H1 (cell line): ENCODE measurements at regions of chr20 and their contacts with region 1.

Region 1: DNA sequence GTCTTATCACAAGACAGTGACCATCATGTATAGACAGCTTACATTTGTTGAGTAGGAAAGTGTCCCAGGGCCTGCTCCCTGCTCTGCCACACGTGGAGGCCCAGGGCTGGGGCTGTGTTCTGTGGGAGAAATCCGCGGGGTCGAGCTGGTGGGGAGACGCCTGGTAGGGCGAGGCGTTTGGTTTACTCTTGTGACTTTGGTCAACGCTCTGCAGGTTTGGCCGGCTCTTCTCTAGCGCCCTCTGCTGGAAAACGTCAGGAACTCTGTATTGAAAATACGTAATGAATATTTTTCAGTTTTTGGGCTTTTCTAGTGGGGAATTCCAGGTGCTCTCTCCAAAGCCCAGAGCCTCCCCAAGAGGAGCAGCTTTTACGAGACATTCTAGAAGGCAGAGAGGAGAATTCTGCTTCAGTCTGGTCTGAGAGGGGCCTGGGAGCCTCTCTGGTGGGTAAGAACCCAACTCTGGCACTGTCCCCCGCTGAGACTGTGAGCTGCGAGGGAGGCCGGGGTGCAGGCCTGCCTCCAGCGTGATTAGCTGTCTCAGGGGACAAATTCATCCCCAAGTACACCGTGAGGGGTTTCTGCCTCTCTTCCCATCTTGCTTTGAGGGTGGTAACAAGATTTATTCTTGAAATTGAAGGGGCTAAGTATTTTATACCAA is 112.6 kb upstream of the RALGAPA2 start:
- DNase-seq: peak in 1 of 2 experiments; percentile 83
- H3K4me3 ChIP-seq: no peak overlapping the region
- H3K27ac ChIP-seq: no peak overlapping the region
- H3K4me1 ChIP-seq: peaks cover 8 to 16% (median 11%) of the 10 kb centered on the region in 4 experiments; a peak in 6 of 7 replicates
- H3K27me3 ChIP-seq: peaks cover 0 to 2% (median 0%) of the 10 kb centered on the region in 4 experiments; a peak in 1 of 7 replicates
- CTCF ChIP-seq: peak; percentile 44 to 84 (median 80)
- EP300 ChIP-seq: no peak
- POLR2A ChIP-seq: no peak
- RAD21 ChIP-seq: peak; percentile 74 to 84

Region 2: DNA sequence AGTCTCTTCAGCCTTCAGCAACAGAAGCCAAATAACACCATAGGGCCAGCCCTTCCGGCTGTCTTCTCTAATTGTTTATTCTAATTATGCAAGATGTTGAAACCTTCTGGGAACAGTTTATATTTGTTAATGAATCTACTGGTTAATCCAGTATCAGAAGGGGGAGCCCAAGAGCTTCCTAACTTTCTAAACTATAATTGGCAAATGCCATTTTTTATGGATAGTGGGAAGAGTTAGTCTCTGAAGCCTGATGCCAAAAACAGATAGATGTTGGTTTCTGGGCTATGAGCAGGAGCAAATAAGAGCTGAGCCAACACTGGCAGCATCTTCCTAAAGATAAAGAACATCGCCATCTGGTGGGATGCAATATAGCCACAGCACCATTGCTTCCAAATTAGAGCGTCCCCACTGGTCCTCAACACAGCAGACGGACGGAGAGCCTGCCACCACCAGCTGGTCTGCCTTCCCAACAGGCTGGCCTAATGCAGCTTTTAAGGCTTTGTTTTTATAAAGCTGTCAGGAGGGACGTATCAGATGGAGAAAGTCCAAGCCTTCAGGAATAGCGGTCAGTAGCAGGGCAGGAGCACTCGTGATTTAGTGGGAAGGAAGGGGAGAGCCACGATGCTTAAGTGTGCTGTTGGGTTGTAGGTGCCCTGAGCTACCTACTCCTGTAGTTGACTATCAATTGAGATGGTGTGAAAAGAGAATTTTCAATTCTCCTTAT is 231.4 kb before region 1 on chr20:
- CTCF ChIA-PET with region 1: interaction called, 11 read pairs
- POLR2A ChIA-PET with region 1: no interaction called
- DNase-seq: peak; percentile 23 to 61
- H3K4me3 ChIP-seq: no peak overlapping the region
- H3K27ac ChIP-seq: no peak overlapping the region
- H3K4me1 ChIP-seq: no peaks in the 10 kb centered on the region
- H3K27me3 ChIP-seq: no peaks in the 10 kb centered on the region
- CTCF ChIP-seq: peak; percentile 63 to 95 (median 92)
- EP300 ChIP-seq: no peak
- POLR2A ChIP-seq: no peak
- RAD21 ChIP-seq: peak; percentile 68 to 82

Region 3: GRCh38 chr20:20791664-20792568 is 33.1 kb before region 1 on chr20:
- CTCF ChIA-PET with region 1: interaction called, 39 read pairs
- POLR2A ChIA-PET with region 1: no interaction called
- DNase-seq: no peak
- H3K4me3 ChIP-seq: no peak overlapping the region
- H3K27ac ChIP-seq: no peak overlapping the region
- H3K4me1 ChIP-seq: no peaks in the 10 kb centered on the region
- H3K27me3 ChIP-seq: no peaks in the 10 kb centered on the region; a peak in 1 of 7 replicates
- CTCF ChIP-seq: no peak
- EP300 ChIP-seq: no peak
- POLR2A ChIP-seq: no peak
- RAD21 ChIP-seq: no peak

Region 4: GRCh38 chr20:20806121-20807095 is 18.6 kb before region 1 on chr20:
- CTCF ChIA-PET with region 1: interaction called, 25 read pairs
- POLR2A ChIA-PET with region 1: interaction called, 3 read pairs
- DNase-seq: no peak
- H3K4me3 ChIP-seq: no peak overlapping the region
- H3K27ac ChIP-seq: no peak overlapping the region
- H3K4me1 ChIP-seq: peaks cover 0 to 8% (median 2%) of the 10 kb centered on the region in 4 experiments; a peak in 4 of 7 replicates
- H3K27me3 ChIP-seq: no peaks in the 10 kb centered on the region
- CTCF ChIP-seq: no peak
- EP300 ChIP-seq: no peak
- POLR2A ChIP-seq: no peak
- RAD21 ChIP-seq: no peak

Region 5: DNA sequence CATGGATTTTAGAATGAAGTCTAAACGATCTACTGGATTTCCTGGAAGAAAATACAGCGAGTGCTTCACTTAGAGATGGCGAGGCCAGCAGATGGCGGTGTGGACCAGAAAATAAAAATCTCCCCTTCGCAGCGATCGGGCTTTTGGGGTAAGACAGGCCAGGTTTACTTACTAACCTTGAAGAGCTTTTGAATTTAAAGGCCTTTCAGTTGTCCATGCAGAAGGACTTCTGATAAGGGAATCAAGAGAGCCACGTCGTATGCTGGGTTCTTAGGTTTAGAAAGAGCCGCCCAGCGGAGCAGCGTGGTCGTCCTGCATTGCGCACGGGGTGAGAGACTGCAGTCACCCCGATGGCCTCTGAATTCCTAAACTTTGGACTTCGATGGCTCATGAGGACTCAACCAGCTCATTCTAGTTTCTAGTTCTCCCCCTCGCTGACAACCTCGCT is 12.5 kb after region 1 on chr20:
- CTCF ChIA-PET with region 1: interaction called, 128 read pairs
- POLR2A ChIA-PET with region 1: no interaction called
- DNase-seq: peak in 1 of 2 experiments; percentile 78
- H3K4me3 ChIP-seq: no peak overlapping the region
- H3K27ac ChIP-seq: no peak overlapping the region
- H3K4me1 ChIP-seq: no peaks in the 10 kb centered on the region
- H3K27me3 ChIP-seq: no peaks in the 10 kb centered on the region; a peak in 1 of 7 replicates
- CTCF ChIP-seq: peak; percentile 53 to 77 (median 72)
- EP300 ChIP-seq: no peak
- POLR2A ChIP-seq: no peak
- RAD21 ChIP-seq: peak; percentile 83 to 85